WTC11 (cell line): ENCODE measurements at regions of chr2 and their contacts with region 1.

Region 1: GRCh38 chr2:217510771-217511291 is 492.0 kb downstream of the TNS1 start:
- DNase-seq: peak; percentile 58
- ATAC-seq: peak; percentile 93
- H3K4me3 Mint-ChIP-seq: peak overlapping the region; percentile 57
- H3K27ac Mint-ChIP-seq: no peak overlapping the region
- H3K4me1 Mint-ChIP-seq: peaks cover 15% of the 10 kb centered on the region
- H3K27me3 Mint-ChIP-seq: peaks cover 3% of the 10 kb centered on the region
- CTCF ChIP-seq: peak; percentile 55

Region 2: DNA sequence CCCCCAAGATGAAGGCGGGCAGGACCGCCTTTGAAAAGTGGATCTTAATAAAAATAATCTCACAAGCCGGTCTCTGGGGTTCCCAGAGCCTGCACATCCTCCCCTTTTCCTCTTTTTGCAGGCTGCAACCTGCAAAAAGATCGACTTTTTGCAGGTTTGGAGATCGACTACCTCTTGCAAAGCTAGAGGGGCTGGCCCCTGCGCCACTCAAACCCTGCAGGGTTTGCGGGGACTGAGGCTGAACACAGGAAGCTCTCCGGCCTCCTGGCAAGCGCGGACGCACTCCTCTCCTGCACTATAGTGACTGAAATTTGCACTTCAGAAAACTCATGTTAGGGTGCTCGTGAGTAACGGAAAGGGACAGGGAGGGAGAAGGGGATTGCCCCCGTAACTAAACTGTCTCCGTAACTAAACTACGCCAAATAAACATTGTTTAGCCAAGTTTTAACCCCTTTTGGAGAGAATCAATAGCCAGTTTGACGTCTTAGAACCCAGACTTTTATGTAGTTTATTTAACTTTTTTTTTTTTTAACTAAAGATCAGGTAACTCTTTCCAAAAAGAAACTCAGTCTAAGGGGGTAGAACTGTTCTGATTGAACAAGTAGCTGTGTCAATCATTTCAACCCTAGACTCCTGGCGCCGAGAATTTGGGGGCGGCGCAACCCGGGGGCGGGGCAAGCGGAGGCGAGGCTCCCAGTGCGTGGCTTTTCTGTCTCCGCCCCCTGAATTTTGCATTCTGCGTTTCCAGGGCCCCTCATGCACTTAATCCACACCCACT is 818.0 kb before region 1 on chr2:
- CTCF ChIA-PET with region 1: interaction called, 16 read pairs
- POLR2A ChIA-PET with region 1: no interaction called
- DNase-seq: peak; percentile 84
- ATAC-seq: peak; percentile 6; the same call in 1 of the 2 replicates
- H3K4me3 Mint-ChIP-seq: peak overlapping the region; percentile 79
- H3K27ac Mint-ChIP-seq: peak overlapping the region; percentile 34
- H3K4me1 Mint-ChIP-seq: peaks cover 53% of the 10 kb centered on the region
- H3K27me3 Mint-ChIP-seq: peaks cover 51% of the 10 kb centered on the region
- CTCF ChIP-seq: no peak

Region 3: DNA sequence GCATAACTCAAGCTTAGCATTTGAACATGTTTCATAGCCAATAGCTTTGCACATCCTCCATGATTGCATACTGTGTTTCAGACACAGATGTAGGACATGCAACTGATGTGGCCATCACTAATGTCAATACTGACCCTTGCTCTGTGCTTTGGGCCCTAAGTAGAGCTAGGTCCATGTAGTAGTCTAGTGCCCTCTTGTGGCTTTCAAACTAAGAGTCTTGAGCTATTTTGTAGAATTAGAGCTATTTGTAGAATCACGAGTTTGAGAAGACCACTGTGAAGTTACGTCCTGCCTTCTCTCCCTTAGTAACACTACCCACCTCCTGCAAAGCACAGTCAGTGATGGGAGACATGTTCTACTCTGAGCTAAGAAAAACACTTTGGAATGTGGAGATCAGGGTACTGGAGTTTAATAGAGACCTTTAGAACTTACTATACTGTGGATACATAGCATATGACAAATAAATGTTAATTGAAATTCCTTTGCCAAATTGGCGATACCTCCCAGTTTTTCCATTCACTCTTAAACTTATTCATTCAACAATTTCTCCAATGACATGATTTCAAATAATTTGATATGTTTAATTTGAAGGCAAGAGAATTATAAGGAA is 344.5 kb before region 1 on chr2:
- CTCF ChIA-PET with region 1: interaction called, 30 read pairs
- POLR2A ChIA-PET with region 1: no interaction called
- DNase-seq: no peak
- ATAC-seq: peak; percentile 75
- H3K4me3 Mint-ChIP-seq: no peak overlapping the region
- H3K27ac Mint-ChIP-seq: no peak overlapping the region
- H3K4me1 Mint-ChIP-seq: no peaks in the 10 kb centered on the region
- H3K27me3 Mint-ChIP-seq: no peaks in the 10 kb centered on the region; the same call in 1 of the 2 replicates
- CTCF ChIP-seq: no peak

Region 4: GRCh38 chr2:217459680-217460405 is 51.0 kb before region 1 on chr2:
- CTCF ChIA-PET with region 1: no interaction called
- POLR2A ChIA-PET with region 1: no interaction called
- DNase-seq: no peak
- ATAC-seq: no peak
- H3K4me3 Mint-ChIP-seq: no peak overlapping the region
- H3K27ac Mint-ChIP-seq: no peak overlapping the region
- H3K4me1 Mint-ChIP-seq: no peaks in the 10 kb centered on the region
- H3K27me3 Mint-ChIP-seq: no peaks in the 10 kb centered on the region
- CTCF ChIP-seq: no peak

Region 5: GRCh38 chr2:217521820-217522219 is 11.0 kb after region 1 on chr2:
- CTCF ChIA-PET with region 1: interaction called, 16 read pairs
- POLR2A ChIA-PET with region 1: no interaction called
- DNase-seq: no peak
- ATAC-seq: no peak
- H3K4me3 Mint-ChIP-seq: no peak overlapping the region
- H3K27ac Mint-ChIP-seq: no peak overlapping the region
- H3K4me1 Mint-ChIP-seq: no peaks in the 10 kb centered on the region
- H3K27me3 Mint-ChIP-seq: peaks cover 5% of the 10 kb centered on the region; the same call in 1 of the 2 replicates
- CTCF ChIP-seq: no peak

Region 6: GRCh38 chr2:217636991-217637944 is 126.4 kb after region 1 on chr2:
- CTCF ChIA-PET with region 1: no interaction called
- POLR2A ChIA-PET with region 1: no interaction called
- DNase-seq: no peak
- ATAC-seq: no peak
- H3K4me3 Mint-ChIP-seq: no peak overlapping the region
- H3K27ac Mint-ChIP-seq: no peak overlapping the region
- H3K4me1 Mint-ChIP-seq: no peaks in the 10 kb centered on the region
- H3K27me3 Mint-ChIP-seq: no peaks in the 10 kb centered on the region; the same call in 1 of the 2 replicates
- CTCF ChIP-seq: no peak

Region 7: GRCh38 chr2:217713395-217714286 is 202.8 kb after region 1 on chr2:
- CTCF ChIA-PET with region 1: interaction called, 27 read pairs
- POLR2A ChIA-PET with region 1: no interaction called
- DNase-seq: peak; percentile 91
- ATAC-seq: peak; percentile 89
- H3K4me3 Mint-ChIP-seq: no peak overlapping the region
- H3K27ac Mint-ChIP-seq: no peak overlapping the region
- H3K4me1 Mint-ChIP-seq: peaks cover 13% of the 10 kb centered on the region
- H3K27me3 Mint-ChIP-seq: peaks cover 3% of the 10 kb centered on the region
- CTCF ChIP-seq: peak; percentile 96